ENCODE measurements at regions of chr10 and their contacts with region 1.

Region 1: GRCh38 chr10:14959276-14960057 is at the start of gene MEIG1:
- DNase-seq: peak; percentile 93 to 97 (median 94)
- ATAC-seq: peak; percentile 96 to 98 (median 98)
- H3K4me3 ChIP-seq: peak within 1 kb of the TSS; percentile 35 to 93 (median 74)
- H3K27ac ChIP-seq: peak within 1 kb of the TSS; percentile 76 to 99 (median 94)
- H3K4me1 ChIP-seq: peaks cover 0 to 20% (median 5%) of the 10 kb centered on the region in 12 donors
- H3K27me3 ChIP-seq: no peaks in the 10 kb centered on the region
- CTCF ChIP-seq: no peak
- POLR2A ChIP-seq: peak in 1 of 2 donors; percentile 61
- total RNA-seq, gene MEIG1: 0.85 TPM in 1 of 9 donors, not detected in the others

Region 2: GRCh38 chr10:14617852-14618251 is 341.6 kb before region 1 on chr10:
- intact Hi-C with region 1: loop called in 1 of 10 experiments (anchors 10 kb)
- DNase-seq: no peak
- ATAC-seq: peak in 2 of 4 donors; percentile 63 to 82
- H3K4me3 ChIP-seq: no peak overlapping the region
- H3K27ac ChIP-seq: peak overlapping the region in 1 of 12 donors; percentile 37
- H3K4me1 ChIP-seq: peaks cover 0 to 37% (median 12%) of the 10 kb centered on the region in 12 donors
- H3K27me3 ChIP-seq: no peaks in the 10 kb centered on the region
- CTCF ChIP-seq: peak in 1 of 12 donors; percentile 24
- POLR2A ChIP-seq: no peak

Region 3: DNA sequence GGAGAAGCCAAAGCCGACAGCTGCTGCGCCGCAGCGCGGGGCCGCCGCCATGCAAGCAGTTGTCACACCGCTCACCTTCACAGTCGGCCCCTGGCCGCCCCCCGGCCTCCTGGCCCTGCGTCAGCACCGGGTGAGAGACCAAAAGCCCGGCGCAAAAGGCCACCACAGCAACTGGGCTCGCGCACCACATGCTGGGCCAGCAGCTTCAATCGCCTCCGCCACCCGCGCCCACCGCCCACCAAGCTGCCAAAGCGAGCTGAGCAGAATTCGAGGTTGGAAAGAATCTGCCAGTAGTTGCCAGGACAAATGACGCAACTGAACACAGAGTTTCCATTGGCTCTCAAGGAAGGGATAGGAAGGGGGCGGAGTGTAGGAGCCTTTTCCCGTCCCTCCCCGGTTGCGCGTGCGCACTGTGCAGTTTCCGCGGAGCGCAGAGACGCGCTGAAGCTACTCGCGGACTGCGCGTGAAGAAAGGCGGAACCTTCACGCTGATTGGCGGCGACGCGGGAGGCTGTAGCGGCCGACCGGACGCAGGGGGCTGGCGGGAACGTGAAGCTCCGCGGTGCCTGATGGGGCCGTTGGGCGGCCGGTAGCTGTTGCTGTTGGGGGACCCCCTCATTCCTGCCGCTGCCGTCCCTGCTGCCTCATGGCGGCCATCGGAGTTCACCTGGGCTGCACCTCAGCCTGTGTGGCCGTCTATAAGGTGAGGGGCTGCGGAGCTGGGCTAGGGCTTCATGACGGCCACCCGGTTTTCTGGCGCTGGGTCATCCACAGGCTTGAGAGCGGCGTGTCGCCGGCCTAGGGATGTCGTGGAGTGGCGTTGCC is 121.5 kb before region 1 on chr10 and contains the starts of genes CDNF, HSPA14 and MSANTD7:
- intact Hi-C with region 1: loop called in 4 of 10 experiments (anchors 5 to 10 kb)
- DNase-seq: peak; percentile 99 to 100 (median 100)
- ATAC-seq: peak; percentile 99
- H3K4me3 ChIP-seq: peak within 1 kb of the TSS; percentile 73 to 99 (median 94)
- H3K27ac ChIP-seq: peak within 1 kb of the TSS; percentile 94 to 99 (median 97)
- H3K4me1 ChIP-seq: peaks cover 5 to 26% (median 17%) of the 10 kb centered on the region in 12 donors
- H3K27me3 ChIP-seq: no peaks in the 10 kb centered on the region
- CTCF ChIP-seq: peak in 1 of 12 donors; percentile 12
- POLR2A ChIP-seq: peak; percentile 28 to 87
- total RNA-seq, gene CDNF: 1.7 to 5.4 (median 4.1) TPM
- total RNA-seq, gene HSPA14: 6.2 to 11.1 (median 8.3) TPM
- total RNA-seq, gene MSANTD7: 4.5 to 8.1 (median 5.6) TPM

Region 4: DNA sequence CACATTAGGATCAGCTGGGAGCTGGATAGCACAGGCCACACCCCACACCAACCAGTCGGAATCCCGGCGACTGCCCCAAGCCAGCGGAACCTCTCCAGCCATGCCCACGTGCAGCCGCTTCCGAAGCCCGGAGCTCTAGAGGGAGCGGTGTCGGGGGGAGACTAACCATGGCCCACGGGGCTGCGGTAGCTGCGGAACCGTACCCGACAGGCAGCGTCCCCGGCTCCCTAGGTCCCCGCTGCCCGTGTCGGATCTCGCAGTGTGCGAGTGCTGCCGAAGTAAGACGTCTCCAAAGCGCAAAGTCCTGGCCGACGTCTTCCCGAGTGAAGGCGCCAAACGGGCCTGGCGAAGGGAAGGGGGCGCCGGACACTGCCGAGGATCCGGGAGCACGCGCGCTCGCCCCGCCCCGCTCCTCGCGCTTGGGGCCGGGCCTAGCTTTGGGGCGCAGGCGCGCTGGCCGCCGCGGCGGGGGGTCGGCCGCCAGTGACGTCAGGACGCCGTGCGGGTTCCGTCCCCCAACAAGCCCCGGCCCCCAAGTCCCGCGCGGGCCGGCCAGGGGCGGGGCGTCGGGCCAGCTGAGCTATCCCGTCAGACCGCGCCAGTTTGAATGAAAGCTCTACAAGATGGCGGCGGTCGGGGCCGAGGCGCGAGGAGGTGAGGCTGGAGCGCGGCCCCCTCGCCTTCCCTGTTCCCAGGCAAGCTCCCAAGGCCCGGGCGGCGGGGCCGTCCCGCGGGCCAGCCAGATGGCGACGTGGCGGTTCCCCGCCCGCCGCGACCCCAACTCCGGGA is 81.0 kb before region 1 on chr10 and contains the start of gene SUV39H2:
- intact Hi-C with region 1: loop called in 5 of 10 experiments (anchors 1 to 5 kb)
- DNase-seq: peak; percentile 96 to 98 (median 97)
- ATAC-seq: peak; percentile 89 to 98 (median 95)
- H3K4me3 ChIP-seq: peak within 1 kb of the TSS; percentile 74 to 97 (median 90)
- H3K27ac ChIP-seq: peak within 1 kb of the TSS; percentile 82 to 99 (median 97)
- H3K4me1 ChIP-seq: peaks cover 0 to 36% (median 22%) of the 10 kb centered on the region in 12 donors
- H3K27me3 ChIP-seq: no peaks in the 10 kb centered on the region
- CTCF ChIP-seq: peak in 5 of 12 donors; percentile 13 to 37 (median 29)
- POLR2A ChIP-seq: peak in 1 of 2 donors; percentile 72
- total RNA-seq, gene SUV39H2: 1.3 to 8.4 (median 5.5) TPM

Region 5: GRCh38 chr10:15088428-15089261 is 129.2 kb after region 1 on chr10 and contains the start of gene ACBD7:
- intact Hi-C with region 1: loop called in 3 of 10 experiments (anchors 10 kb)
- DNase-seq: peak; percentile 73 to 88 (median 76)
- ATAC-seq: peak; percentile 89 to 99 (median 96)
- H3K4me3 ChIP-seq: peak within 1 kb of the TSS; percentile 20 to 73 (median 62)
- H3K27ac ChIP-seq: no peak within 1 kb of the TSS
- H3K4me1 ChIP-seq: peaks cover 0 to 20% (median 8%) of the 10 kb centered on the region in 12 donors
- H3K27me3 ChIP-seq: peaks cover 0 to 13% (median 0%) of the 10 kb centered on the region in 9 donors
- CTCF ChIP-seq: peak in 10 of 12 donors; percentile 30 to 65 (median 54)
- POLR2A ChIP-seq: no peak
- total RNA-seq, gene ACBD7: 1.1 TPM in 1 of 9 donors, not detected in the others

Region 6: GRCh38 chr10:15097011-15097812 is 137.7 kb after region 1 on chr10 and contains the start of gene RPP38:
- intact Hi-C with region 1: loop called in 8 of 10 experiments (anchors 5 to 10 kb)
- DNase-seq: peak; percentile 95 to 99 (median 97)
- ATAC-seq: peak; percentile 97 to 99 (median 98)
- H3K4me3 ChIP-seq: peak within 1 kb of the TSS; percentile 63 to 97 (median 88)
- H3K27ac ChIP-seq: peak within 1 kb of the TSS; percentile 85 to 100 (median 95)
- H3K4me1 ChIP-seq: peaks cover 2 to 31% (median 19%) of the 10 kb centered on the region in 12 donors
- H3K27me3 ChIP-seq: peaks cover 0 to 3% (median 0%) of the 10 kb centered on the region in 9 donors
- CTCF ChIP-seq: peak in 1 of 12 donors; percentile 3
- POLR2A ChIP-seq: peak in 1 of 2 donors; percentile 78
- total RNA-seq, gene RPP38: 7.2 to 14.4 (median 8.9) TPM

Region 7: DNA sequence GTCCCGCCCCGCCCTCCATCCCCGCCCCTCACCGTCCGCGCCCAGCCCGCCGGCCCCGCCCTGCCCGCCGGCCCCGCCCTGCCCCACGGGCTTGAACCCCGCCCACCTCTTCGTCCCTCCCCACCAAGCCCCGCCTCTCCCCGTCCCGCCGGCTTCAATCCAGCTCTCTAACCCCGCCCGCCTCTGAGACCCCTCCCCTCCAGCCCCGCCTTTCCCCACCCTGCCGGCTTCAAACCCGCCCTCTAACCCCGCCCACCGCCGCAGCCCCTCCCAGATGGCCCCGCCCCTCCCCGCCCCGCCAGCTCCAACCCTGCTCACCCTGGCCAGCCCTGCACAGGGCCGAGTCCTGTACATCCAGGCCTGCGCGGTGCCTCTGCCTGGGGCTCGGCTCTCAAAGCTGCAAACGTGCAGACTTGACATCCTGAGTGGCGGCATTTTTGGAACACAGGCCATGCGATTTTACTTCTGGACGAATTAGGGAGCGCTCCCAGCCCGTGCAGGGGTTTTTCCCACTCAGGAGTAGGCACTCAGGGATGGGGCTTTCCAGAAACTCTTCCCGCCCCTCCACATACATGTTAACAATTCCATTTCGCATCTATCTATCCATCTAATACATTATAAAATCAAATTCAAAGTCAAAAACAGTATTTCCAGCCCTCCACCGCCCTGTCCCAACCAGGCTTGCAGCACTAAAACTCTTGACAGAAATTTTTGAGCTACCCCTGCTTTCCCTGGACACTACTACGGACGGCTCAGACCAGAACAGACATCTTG is 209.5 kb after region 1 on chr10:
- intact Hi-C with region 1: loop called in 1 of 10 experiments (anchors 5 kb)
- DNase-seq: peak; percentile 96 to 98 (median 98)
- ATAC-seq: peak; percentile 88 to 96 (median 92)
- H3K4me3 ChIP-seq: peak overlapping the region in 9 of 12 donors; percentile 11 to 64 (median 32)
- H3K27ac ChIP-seq: peak overlapping the region in 11 of 12 donors; percentile 4 to 82 (median 66)
- H3K4me1 ChIP-seq: peaks cover 3 to 38% (median 25%) of the 10 kb centered on the region in 12 donors
- H3K27me3 ChIP-seq: no peaks in the 10 kb centered on the region
- CTCF ChIP-seq: no peak
- POLR2A ChIP-seq: peak in 1 of 2 donors; percentile 73

Region 8: DNA sequence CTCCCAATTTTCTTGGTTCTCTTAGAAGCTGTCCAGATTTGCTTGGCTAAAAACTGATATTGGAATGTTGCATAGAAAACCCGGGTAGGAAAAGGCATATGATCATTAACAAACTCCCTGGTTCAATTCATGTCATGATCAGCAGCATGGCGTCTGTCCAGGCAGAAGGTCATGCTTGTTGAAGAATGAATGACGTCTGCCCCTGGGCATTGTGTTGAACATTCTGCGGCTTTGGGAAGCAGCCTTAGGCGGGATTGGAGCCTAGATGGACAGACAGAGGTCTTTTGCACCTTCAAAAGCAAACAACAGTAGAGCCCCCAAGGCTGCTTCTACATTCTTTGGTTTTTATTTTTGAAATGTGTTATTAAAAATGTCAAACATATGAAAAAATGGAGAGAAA is 908.5 kb after region 1 on chr10:
- intact Hi-C with region 1: no loop called
- DNase-seq: no peak
- ATAC-seq: no peak
- H3K4me3 ChIP-seq: no peak overlapping the region
- H3K27ac ChIP-seq: no peak overlapping the region
- H3K4me1 ChIP-seq: no peaks in the 10 kb centered on the region
- H3K27me3 ChIP-seq: peaks cover 0 to 58% (median 8%) of the 10 kb centered on the region in 9 donors
- CTCF ChIP-seq: no peak
- POLR2A ChIP-seq: no peak